ENCODE measurements at regions of chr7 and their contacts with region 1.

Region 1: DNA sequence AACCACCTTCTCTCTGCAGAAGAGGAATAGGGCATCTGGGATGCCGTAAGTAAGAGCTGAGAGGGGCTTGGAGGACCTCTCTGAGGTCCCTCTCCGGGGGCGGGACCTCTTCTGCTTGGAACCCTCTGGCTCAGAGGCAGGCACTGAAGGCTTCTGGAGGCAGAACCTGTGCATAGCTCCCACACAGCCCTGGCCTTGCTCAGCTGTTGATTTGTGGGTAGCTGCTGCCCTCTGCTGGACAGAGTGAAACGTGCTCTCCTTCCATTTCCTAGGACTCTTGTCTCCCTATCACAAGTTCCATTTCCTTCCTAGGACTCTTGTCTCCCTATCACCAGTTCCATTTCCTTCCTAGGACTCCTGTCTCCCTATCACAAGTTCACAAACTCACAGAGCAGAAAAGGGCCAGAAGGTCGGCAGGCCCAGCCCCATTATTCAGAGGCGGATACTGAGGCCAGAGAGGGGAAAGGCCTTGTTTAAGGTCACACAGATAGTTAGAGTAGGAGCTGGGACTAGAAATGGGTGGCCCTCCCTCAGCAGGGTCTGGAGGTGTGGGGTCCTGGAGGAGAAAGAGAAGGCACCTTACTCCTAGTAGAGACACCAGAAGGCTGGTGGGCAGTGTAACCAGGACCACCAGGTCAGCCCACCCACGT is 30.3 kb upstream of the GARS1 start:
- DNase-seq: peak; percentile 45 to 77 (median 66)
- ATAC-seq: peak; percentile 98
- H3K4me3 ChIP-seq: no peak overlapping the region
- H3K4me3 Mint-ChIP-seq: peak overlapping the region in 1 of 10 donors; percentile 9
- H3K27ac ChIP-seq: no peak overlapping the region
- H3K27ac Mint-ChIP-seq: peak overlapping the region in 3 of 9 donors; percentile 3 to 39 (median 5)
- H3K4me1 ChIP-seq: no peaks in the 10 kb centered on the region
- H3K4me1 Mint-ChIP-seq: peaks cover 0 to 4% (median 0%) of the 10 kb centered on the region in 7 donors
- H3K27me3 ChIP-seq: no peaks in the 10 kb centered on the region
- H3K27me3 Mint-ChIP-seq: no peaks in the 10 kb centered on the region

Region 2: GRCh38 chr7:28926871-28927597 is 1637.3 kb before region 1 on chr7:
- CTCF ChIA-PET with region 1: no interaction called
- POLR2A ChIA-PET with region 1: no interaction called
- intact Hi-C with region 1: loop called in 1 of 2 experiments (anchors 10 kb)
- DNase-seq: peak; percentile 16 to 72 (median 60)
- ATAC-seq: peak; percentile 93
- H3K4me3 ChIP-seq: peak overlapping the region; percentile 57
- H3K4me3 Mint-ChIP-seq: peak overlapping the region; percentile 79 to 97 (median 90)
- H3K27ac ChIP-seq: no peak overlapping the region
- H3K27ac Mint-ChIP-seq: peak overlapping the region in 8 of 9 donors; percentile 9 to 92 (median 53)
- H3K4me1 ChIP-seq: peaks cover 4 to 12% of the 10 kb centered on the region in 2 donors
- H3K4me1 Mint-ChIP-seq: peaks cover 0 to 36% (median 23%) of the 10 kb centered on the region in 7 donors
- H3K27me3 ChIP-seq: no peaks in the 10 kb centered on the region
- H3K27me3 Mint-ChIP-seq: peaks cover 3 to 29% (median 7%) of the 10 kb centered on the region in 5 donors

Region 3: DNA sequence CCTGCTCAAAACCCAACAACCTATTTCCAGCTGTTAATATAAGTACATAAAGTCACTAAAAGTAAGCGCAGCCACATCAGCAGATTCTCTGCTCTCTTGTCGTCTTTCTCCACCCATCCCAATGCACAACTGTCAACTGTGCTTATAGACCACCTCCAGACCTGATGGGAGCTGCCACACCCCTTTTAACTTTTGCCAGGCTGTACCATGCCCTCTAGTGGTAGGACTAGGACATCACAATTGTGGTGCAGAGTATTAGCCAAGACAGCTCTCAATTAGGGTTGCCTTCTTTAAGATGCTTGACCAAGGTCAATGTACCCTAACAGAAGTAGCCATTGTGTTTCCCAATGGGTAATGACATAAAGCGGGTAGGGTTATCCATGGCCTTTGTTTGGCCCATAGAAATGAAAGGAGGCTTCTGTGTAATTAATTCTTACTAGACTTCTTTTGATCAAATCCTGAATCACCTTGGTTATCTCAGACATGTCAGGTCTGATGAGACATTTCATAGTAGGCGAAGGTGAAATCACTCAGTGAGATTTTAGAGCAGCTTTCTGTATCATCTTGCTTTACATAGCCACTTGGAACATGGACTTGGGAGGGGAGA is 642.9 kb before region 1 on chr7:
- CTCF ChIA-PET with region 1: no interaction called
- POLR2A ChIA-PET with region 1: no interaction called
- intact Hi-C with region 1: loop called in 1 of 2 experiments (anchors 1 kb)
- DNase-seq: peak in 8 of 9 donors; percentile 11 to 55 (median 38)
- ATAC-seq: peak; percentile 93
- H3K4me3 ChIP-seq: no peak overlapping the region
- H3K4me3 Mint-ChIP-seq: no peak overlapping the region
- H3K27ac ChIP-seq: no peak overlapping the region
- H3K27ac Mint-ChIP-seq: no peak overlapping the region
- H3K4me1 ChIP-seq: no peaks in the 10 kb centered on the region
- H3K4me1 Mint-ChIP-seq: peaks cover 0 to 2% (median 0%) of the 10 kb centered on the region in 7 donors
- H3K27me3 ChIP-seq: no peaks in the 10 kb centered on the region
- H3K27me3 Mint-ChIP-seq: peaks cover 0 to 12% (median under 1%) of the 10 kb centered on the region in 5 donors

Region 4: DNA sequence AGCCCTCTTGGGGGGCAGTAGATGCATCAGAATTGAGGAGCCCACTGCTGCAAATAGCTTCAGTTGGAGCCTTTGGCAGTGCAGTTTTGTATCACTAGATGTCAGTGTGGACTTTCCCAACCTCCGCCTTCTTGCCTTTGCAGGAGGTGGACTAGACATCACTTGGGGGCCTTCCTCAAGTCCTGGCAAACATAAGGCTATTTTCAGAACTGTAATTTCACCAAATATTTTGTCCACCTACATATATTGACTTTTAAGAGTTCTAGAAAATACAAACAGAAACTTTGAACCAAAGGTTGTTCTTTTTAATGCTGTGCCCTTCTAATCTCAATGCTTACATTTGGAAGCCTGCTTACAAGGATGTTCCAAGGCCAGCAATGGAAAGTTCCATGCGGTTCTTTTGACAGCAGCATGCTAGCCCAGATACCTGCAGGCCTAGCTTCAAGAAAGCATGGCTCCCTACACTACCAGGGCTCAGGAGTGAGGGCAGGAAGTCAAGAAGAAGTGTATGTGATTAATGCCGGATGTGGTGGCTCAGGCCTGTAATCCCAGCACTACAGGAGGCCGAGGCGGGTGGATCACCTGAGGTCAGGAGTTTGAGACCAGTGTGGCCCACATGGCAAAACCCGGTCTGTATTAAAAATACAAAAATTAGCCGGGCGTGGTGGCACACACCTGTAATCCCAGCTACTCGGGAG is 288.0 kb before region 1 on chr7:
- CTCF ChIA-PET with region 1: interaction called, 45 read pairs
- POLR2A ChIA-PET with region 1: no interaction called
- intact Hi-C with region 1: loop called (anchors 1 kb)
- DNase-seq: peak; percentile 10 to 66 (median 40)
- ATAC-seq: peak; percentile 79
- H3K4me3 ChIP-seq: no peak overlapping the region
- H3K4me3 Mint-ChIP-seq: no peak overlapping the region
- H3K27ac ChIP-seq: no peak overlapping the region
- H3K27ac Mint-ChIP-seq: peak overlapping the region in 1 of 9 donors; percentile 10
- H3K4me1 ChIP-seq: no peaks in the 10 kb centered on the region
- H3K4me1 Mint-ChIP-seq: peaks cover 0 to 9% (median 4%) of the 10 kb centered on the region in 7 donors
- H3K27me3 ChIP-seq: no peaks in the 10 kb centered on the region
- H3K27me3 Mint-ChIP-seq: peaks cover 0 to 4% (median 0%) of the 10 kb centered on the region in 5 donors

Region 5: GRCh38 chr7:30548762-30549344 is 15.5 kb before region 1 on chr7:
- CTCF ChIA-PET with region 1: interaction called, 9 read pairs
- POLR2A ChIA-PET with region 1: no interaction called
- intact Hi-C with region 1: loop called (anchors 1 kb)
- DNase-seq: peak in 4 of 9 donors; percentile 2 to 22 (median 8)
- ATAC-seq: peak; percentile 61
- H3K4me3 ChIP-seq: no peak overlapping the region
- H3K4me3 Mint-ChIP-seq: no peak overlapping the region
- H3K27ac ChIP-seq: no peak overlapping the region
- H3K27ac Mint-ChIP-seq: no peak overlapping the region
- H3K4me1 ChIP-seq: no peaks in the 10 kb centered on the region
- H3K4me1 Mint-ChIP-seq: peaks cover 0 to 6% (median 0%) of the 10 kb centered on the region in 7 donors
- H3K27me3 ChIP-seq: no peaks in the 10 kb centered on the region
- H3K27me3 Mint-ChIP-seq: no peaks in the 10 kb centered on the region

Region 6: GRCh38 chr7:30911561-30911969 is 347.2 kb after region 1 on chr7 and contains the start of gene AQP1:
- CTCF ChIA-PET with region 1: no interaction called
- POLR2A ChIA-PET with region 1: no interaction called
- intact Hi-C with region 1: no loop called
- DNase-seq: no peak
- ATAC-seq: no peak
- H3K4me3 ChIP-seq: no peak within 1 kb of the TSS
- H3K4me3 Mint-ChIP-seq: no peak within 1 kb of the TSS
- H3K27ac ChIP-seq: no peak within 1 kb of the TSS
- H3K27ac Mint-ChIP-seq: no peak within 1 kb of the TSS
- H3K4me1 ChIP-seq: no peaks in the 10 kb centered on the region
- H3K4me1 Mint-ChIP-seq: peaks cover 0 to 6% (median 0%) of the 10 kb centered on the region in 7 donors
- H3K27me3 ChIP-seq: no peaks in the 10 kb centered on the region
- H3K27me3 Mint-ChIP-seq: peaks cover 0 to 3% (median 0%) of the 10 kb centered on the region in 5 donors
- total RNA-seq, gene AQP1: 0.12 to 0.37 (median 0.19) TPM in 3 of 5 experiments, not detected in the others

Measured in naive thymus-derived CD4-positive, alpha-beta T cell (primary cell).